Dendritic cell treated with granulocyte-macrophage colony-stimulating factor and Interleukin-4, amounts not matched to agents 40 ng/mL and 50 ng/mL, for 4 days (primary cell): ENCODE measurements at regions of chr13 and their contacts with region 1.

Region 1: DNA sequence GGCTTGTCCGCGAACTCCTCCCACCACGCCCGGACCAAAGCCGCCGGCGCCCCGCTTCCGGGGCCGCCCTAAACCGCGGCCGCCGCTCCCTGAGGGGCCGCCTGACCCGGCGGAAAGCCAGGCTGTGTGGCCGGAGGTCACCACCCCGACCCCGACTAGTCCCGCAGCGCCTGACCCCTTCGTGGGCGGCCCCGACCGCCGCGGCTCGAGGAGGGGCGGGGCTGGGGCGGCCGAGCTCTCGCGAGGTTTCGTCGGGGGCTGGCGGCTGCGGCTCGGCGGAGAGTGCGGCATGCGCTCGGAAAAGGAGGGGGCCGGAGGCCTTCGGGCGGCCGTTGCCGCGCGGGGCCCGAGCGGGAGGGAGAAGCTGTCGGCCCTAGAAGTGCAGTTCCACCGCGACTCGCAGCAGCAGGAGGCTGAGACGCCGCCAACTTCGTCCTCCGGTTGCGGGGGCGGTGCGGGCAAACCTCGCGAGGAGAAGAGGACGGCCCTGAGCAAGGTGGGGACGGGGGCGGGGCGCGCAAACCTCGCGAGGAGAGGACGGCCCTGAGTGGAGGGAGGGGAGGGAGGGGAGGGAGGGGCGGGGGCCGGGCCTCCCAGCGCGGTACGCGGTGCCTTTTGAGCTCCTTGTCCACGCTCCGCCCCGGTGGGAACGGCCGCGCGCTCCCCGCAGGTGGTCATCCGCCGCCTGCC is at the start of gene UPF3A:
- H3K4me3 Mint-ChIP-seq: peak within 1 kb of the TSS; percentile 93
- H3K27ac Mint-ChIP-seq: peak within 1 kb of the TSS; percentile 97
- H3K4me1 Mint-ChIP-seq: peaks cover 34% of the 10 kb centered on the region
- H3K27me3 Mint-ChIP-seq: no peaks in the 10 kb centered on the region

Region 2: GRCh38 chr13:114248011-114248410 is 33.5 kb before region 1 on chr13:
- intact Hi-C with region 1: no loop called
- H3K4me3 Mint-ChIP-seq: no peak overlapping the region
- H3K27ac Mint-ChIP-seq: no peak overlapping the region
- H3K4me1 Mint-ChIP-seq: peaks cover 5% of the 10 kb centered on the region
- H3K27me3 Mint-ChIP-seq: no peaks in the 10 kb centered on the region

Region 3: GRCh38 chr13:114314074-114314912 is 32.8 kb after region 1 on chr13 and contains the start of gene CHAMP1:
- intact Hi-C with region 1: loop called (anchors 1 kb)
- H3K4me3 Mint-ChIP-seq: peak within 1 kb of the TSS; percentile 80
- H3K27ac Mint-ChIP-seq: peak within 1 kb of the TSS; percentile 97
- H3K4me1 Mint-ChIP-seq: peaks cover 49% of the 10 kb centered on the region
- H3K27me3 Mint-ChIP-seq: no peaks in the 10 kb centered on the region